ENCODE measurements at regions of chr3 and their contacts with region 1.

Region 1: GRCh38 chr3:124559881-124560574 is 170.2 kb upstream of the UMPS start:
- DNase-seq: peak; percentile 83 to 85
- ATAC-seq: peak; percentile 82 to 89
- H3K4me3 ChIP-seq: no peak overlapping the region
- H3K27ac ChIP-seq: peak overlapping the region; percentile 55 to 75; a peak in 5 of 6 replicates
- H3K4me1 ChIP-seq: peaks cover 29% of the 10 kb centered on the region
- CTCF ChIP-seq: peak; percentile 87
- EP300 ChIP-seq: no peak
- POLR2A ChIP-seq: no peak
- RAD21 ChIP-seq: peak; percentile 84 to 92

Region 2: GRCh38 chr3:124351430-124352148 is 208.4 kb before region 1 on chr3:
- CTCF ChIA-PET with region 1: interaction called, 48 read pairs
- POLR2A ChIA-PET with region 1: no interaction called
- DNase-seq: peak; percentile 60 to 63
- ATAC-seq: peak; percentile 69 to 90
- H3K4me3 ChIP-seq: no peak overlapping the region
- H3K27ac ChIP-seq: no peak overlapping the region
- H3K4me1 ChIP-seq: peaks cover 6% of the 10 kb centered on the region; the same call in 2 of the 3 replicates
- CTCF ChIP-seq: peak; percentile 71
- EP300 ChIP-seq: no peak
- POLR2A ChIP-seq: no peak
- RAD21 ChIP-seq: peak; percentile 75 to 84

Region 3: GRCh38 chr3:124439603-124440002 is 120.4 kb before region 1 on chr3:
- CTCF ChIA-PET with region 1: no interaction called
- POLR2A ChIA-PET with region 1: no interaction called
- DNase-seq: no peak
- ATAC-seq: no peak
- H3K4me3 ChIP-seq: no peak overlapping the region
- H3K27ac ChIP-seq: no peak overlapping the region
- H3K4me1 ChIP-seq: no peaks in the 10 kb centered on the region
- CTCF ChIP-seq: no peak
- EP300 ChIP-seq: no peak
- POLR2A ChIP-seq: no peak
- RAD21 ChIP-seq: no peak

Region 4: DNA sequence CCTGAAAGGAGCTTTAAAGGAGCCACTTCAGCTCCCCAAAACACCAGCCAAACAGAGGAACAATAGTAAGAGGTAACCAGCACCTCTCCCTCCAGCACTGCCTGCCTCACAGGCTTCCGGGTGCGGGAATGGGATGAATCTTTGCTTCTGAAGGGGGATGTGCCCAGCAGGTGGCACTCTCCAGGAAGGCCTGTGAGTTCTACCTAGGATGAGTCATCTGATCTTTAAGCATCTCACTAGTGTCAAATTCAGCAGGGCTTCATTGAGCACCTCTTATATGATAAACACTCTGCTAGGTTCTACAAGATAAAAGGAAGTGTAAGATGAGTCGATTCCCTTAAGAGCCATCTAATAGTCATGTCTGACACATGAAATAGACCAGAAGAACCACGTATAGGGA is 67.2 kb before region 1 on chr3:
- CTCF ChIA-PET with region 1: interaction called, 21 read pairs
- POLR2A ChIA-PET with region 1: no interaction called
- DNase-seq: peak; percentile 64 to 85
- ATAC-seq: peak; percentile 81 to 93
- H3K4me3 ChIP-seq: no peak overlapping the region
- H3K27ac ChIP-seq: no peak overlapping the region
- H3K4me1 ChIP-seq: no peaks in the 10 kb centered on the region
- CTCF ChIP-seq: peak; percentile 52
- EP300 ChIP-seq: no peak
- POLR2A ChIP-seq: no peak
- RAD21 ChIP-seq: peak; percentile 42 to 46; a peak in 3 of 5 replicates

Region 5: DNA sequence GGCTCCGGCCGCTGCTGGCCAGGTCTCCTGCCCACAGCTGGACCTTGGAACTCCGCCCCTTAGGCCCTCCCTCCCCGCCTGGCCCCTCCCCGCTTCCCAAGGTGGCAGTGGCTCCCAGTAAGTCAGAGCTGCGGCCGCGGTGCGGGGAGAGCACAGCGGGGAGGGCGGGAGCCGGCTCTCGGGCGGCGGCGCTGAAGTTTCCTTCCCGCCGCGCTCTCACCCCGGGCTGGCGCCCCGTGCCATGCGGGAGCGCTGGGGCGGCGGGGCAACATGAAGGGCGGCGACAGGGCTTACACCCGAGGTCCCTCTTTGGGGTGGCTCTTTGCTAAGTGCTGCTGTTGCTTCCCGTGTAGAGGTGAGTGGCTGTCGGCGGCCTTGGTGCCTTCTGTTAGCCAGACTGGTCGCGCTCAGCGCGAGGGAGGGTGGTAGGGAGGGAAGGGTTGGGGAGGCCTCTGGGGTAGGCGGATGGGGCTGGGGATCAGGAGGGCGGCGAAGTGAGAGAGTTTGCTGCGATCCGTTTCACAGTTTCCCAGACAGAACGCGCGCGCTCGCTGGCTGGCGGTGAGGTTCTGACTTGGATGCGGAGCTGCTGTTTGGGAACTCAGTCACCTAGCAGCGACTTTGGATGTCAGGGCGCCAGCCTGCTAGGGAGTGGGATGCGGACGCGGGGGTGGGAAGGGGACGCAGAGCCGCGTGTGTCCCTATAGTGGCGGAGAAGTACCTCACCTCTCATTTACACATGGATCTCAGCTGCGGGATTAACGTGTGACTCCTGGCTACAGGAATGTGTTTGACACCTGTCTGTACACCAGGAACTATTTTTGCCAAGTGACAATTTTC is 24.7 kb after region 1 on chr3:
- CTCF ChIA-PET with region 1: interaction called, 16 read pairs
- POLR2A ChIA-PET with region 1: no interaction called
- DNase-seq: peak; percentile 69 to 91
- ATAC-seq: peak; percentile 96 to 98
- H3K4me3 ChIP-seq: peak overlapping the region; percentile 77
- H3K27ac ChIP-seq: peak overlapping the region; percentile 64 to 83; a peak in 5 of 6 replicates
- H3K4me1 ChIP-seq: peaks cover 3% of the 10 kb centered on the region; the same call in 1 of the 3 replicates
- CTCF ChIP-seq: no peak
- EP300 ChIP-seq: no peak
- POLR2A ChIP-seq: peak; percentile 12; the same call in 1 of the 2 replicates
- RAD21 ChIP-seq: no peak

Region 6: GRCh38 chr3:124688581-124689454 is 128.8 kb after region 1 on chr3:
- CTCF ChIA-PET with region 1: interaction called, 348 read pairs
- POLR2A ChIA-PET with region 1: no interaction called
- DNase-seq: peak; percentile 82 to 93
- ATAC-seq: peak; percentile 98 to 99
- H3K4me3 ChIP-seq: no peak overlapping the region
- H3K27ac ChIP-seq: no peak overlapping the region
- H3K4me1 ChIP-seq: no peaks in the 10 kb centered on the region
- CTCF ChIP-seq: peak; percentile 96
- EP300 ChIP-seq: no peak
- POLR2A ChIP-seq: no peak
- RAD21 ChIP-seq: peak; percentile 94

Region 7: GRCh38 chr3:125186261-125186787 is 626.3 kb after region 1 on chr3:
- CTCF ChIA-PET with region 1: no interaction called
- POLR2A ChIA-PET with region 1: no interaction called
- DNase-seq: no peak
- ATAC-seq: no peak
- H3K4me3 ChIP-seq: no peak overlapping the region
- H3K27ac ChIP-seq: no peak overlapping the region
- H3K4me1 ChIP-seq: no peaks in the 10 kb centered on the region
- CTCF ChIP-seq: no peak
- EP300 ChIP-seq: no peak
- POLR2A ChIP-seq: no peak
- RAD21 ChIP-seq: no peak

Measured in A549 (cell line).